Right ventricle myocardium inferior (tissue), 1 donor: ENCODE measurements at regions of chr3 and their contacts with region 1.

Region 1: GRCh38 chr3:121604759-121605158 is 11.6 kb downstream of the FBXO40 start:
- DNase-seq: no peak
- ATAC-seq: no peak

Region 2: DNA sequence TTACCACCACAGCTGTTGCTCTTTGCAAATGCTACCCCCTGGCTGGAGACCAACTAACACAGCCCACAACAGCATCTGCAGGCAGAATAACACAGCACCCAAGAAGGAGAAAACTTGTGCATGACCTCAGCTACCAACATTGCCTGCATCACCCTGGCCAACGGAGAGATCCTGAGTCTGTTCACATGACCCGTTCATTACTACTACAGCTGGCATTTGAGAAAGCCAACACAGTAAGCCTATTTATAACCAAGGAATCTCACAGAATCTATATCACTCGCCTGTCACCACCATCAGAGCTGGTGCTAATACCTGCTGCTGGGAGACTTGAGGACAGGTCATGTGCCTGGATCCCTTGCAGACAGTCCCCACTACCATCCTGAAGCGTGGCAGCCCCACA is 274.1 kb before region 1 on chr3:
- intact Hi-C with region 1: no loop called
- DNase-seq: no peak
- ATAC-seq: no peak

Region 3: GRCh38 chr3:121624147-121624899 is 19.6 kb after region 1 on chr3:
- intact Hi-C with region 1: loop called (anchors 2 kb)
- DNase-seq: no peak
- ATAC-seq: peak; percentile 30